K562 (cell line): ENCODE measurements at regions of chr4 and their contacts with region 1.

Region 1: DNA sequence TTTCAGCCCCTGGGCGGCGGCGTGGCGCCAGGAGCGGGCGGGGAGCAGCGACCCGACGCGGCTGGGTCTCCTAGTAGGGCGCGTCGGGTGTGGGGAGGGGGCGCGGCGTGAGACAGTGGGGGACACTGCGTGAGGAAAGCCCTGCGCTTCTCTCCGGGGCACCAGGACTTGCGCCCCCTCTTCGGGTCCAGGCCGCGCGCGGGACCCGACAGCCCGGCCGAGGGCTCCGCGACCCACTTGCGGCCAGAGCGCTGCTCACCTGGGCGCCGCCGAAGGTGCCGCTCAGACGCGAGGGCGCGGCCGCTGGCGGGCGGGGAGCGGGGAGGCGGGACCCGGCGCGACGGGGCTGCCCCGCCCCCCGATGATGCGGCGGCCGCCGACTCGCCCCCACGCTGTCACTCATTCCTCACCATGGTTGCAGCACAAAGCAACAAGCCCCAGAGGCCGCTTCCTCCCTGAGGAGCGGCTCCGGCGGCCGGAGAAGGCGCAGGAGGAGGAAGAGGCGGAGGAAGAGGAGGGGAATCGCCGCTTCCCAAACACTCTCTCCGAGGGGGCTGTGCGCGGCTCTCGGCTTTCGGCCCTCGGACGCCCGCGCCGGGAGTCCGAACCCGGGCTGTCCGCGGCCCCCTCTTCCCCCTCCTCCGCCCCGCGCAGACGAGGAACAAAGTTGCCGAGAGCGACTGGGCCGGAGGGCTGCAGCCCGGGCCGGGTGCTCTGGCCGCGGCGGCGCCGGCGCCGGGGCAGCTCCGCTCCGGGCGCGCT is at the start of gene RAPGEF2:
- DNase-seq: peak; percentile 94 to 96 (median 94)
- ATAC-seq: peak; percentile 79
- H3K4me3 ChIP-seq: peak within 1 kb of the TSS; percentile 93
- H3K27ac ChIP-seq: peak within 1 kb of the TSS; percentile 83
- H3K4me1 ChIP-seq: peaks cover 13 to 31% of the 10 kb centered on the region in 2 experiments
- H3K27me3 ChIP-seq: no peaks in the 10 kb centered on the region
- CTCF ChIP-seq: 0 out of 6 replicates have a peak, but pooled peaks of 1 of the 3 experiments have one; percentile 5
- EP300 ChIP-seq: no peak
- POLR2A ChIP-seq: peak; percentile 76
- RAD21 ChIP-seq: no peak
- polyA plus RNA-seq, gene RAPGEF2: 3.1 to 3.4 TPM

Region 2: GRCh38 chr4:158578476-158578875 is 524.3 kb before region 1 on chr4:
- CTCF ChIA-PET with region 1: no interaction called
- POLR2A ChIA-PET with region 1: no interaction called
- in situ Hi-C with region 1: no loop called
- intact Hi-C with region 1: no loop called
- DNase-seq: peak in 3 of 4 experiments; percentile 12 to 35 (median 27)
- ATAC-seq: peak; percentile 95
- H3K4me3 ChIP-seq: no peak overlapping the region
- H3K27ac ChIP-seq: no peak overlapping the region
- H3K4me1 ChIP-seq: no peaks in the 10 kb centered on the region
- H3K27me3 ChIP-seq: no peaks in the 10 kb centered on the region; a peak in 1 of 5 replicates
- CTCF ChIP-seq: peak; percentile 34 to 63 (median 38); a peak in 3 of 6 replicates
- EP300 ChIP-seq: no peak
- POLR2A ChIP-seq: no peak
- RAD21 ChIP-seq: peak; percentile 54 to 63

Region 3: DNA sequence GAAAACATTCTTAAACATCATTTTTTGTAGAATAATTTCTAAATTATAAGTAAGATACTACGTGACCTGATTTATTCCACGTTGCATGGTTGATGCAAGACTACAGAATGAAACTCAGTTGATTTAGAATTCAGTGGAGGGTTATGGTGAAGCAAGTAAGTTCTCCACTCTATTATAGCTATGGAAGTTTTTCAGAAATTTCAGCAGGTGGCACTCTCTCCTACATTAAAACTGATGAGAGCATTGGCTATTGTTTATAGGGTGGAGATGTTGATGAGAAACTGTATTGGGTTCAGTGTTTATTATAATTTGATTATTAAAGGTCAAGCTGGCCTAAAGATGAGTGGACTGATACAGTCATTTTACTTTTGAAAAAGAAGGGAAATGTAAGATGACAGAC is 246.0 kb before region 1 on chr4:
- CTCF ChIA-PET with region 1: no interaction called
- POLR2A ChIA-PET with region 1: no interaction called
- in situ Hi-C with region 1: no loop called
- intact Hi-C with region 1: loop called (anchors 5 kb)
- DNase-seq: peak in 2 of 4 experiments; percentile 28 to 32
- ATAC-seq: peak; percentile 96
- H3K4me3 ChIP-seq: no peak overlapping the region
- H3K27ac ChIP-seq: no peak overlapping the region
- H3K4me1 ChIP-seq: no peaks in the 10 kb centered on the region
- H3K27me3 ChIP-seq: no peaks in the 10 kb centered on the region
- CTCF ChIP-seq: peak; percentile 55 to 80 (median 61); a peak in 5 of 6 replicates
- EP300 ChIP-seq: no peak
- POLR2A ChIP-seq: no peak
- RAD21 ChIP-seq: peak; percentile 90 to 92

Region 4: DNA sequence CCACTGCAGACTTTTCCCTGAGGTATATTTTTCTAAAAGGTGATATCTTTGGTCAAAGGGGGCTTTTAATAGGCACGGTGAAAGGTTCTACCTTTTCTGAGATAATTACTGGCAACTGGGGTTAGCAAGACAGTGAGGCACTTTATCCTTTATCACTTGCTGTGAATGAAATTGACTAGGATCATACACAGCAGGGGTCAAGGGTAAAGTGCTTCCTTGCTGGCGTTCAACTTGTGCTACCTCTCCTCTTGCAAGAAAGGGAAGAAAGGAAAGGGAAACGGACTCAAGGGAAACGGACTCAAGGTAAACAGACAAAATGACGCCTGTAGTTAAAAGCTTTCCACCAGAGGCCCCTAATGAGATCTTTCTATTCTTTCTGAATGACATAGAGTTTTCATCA is 78.5 kb before region 1 on chr4:
- CTCF ChIA-PET with region 1: no interaction called
- POLR2A ChIA-PET with region 1: no interaction called
- in situ Hi-C with region 1: no loop called
- intact Hi-C with region 1: loop called (anchors 5 kb)
- DNase-seq: no peak
- ATAC-seq: peak; percentile 64
- H3K4me3 ChIP-seq: no peak overlapping the region
- H3K27ac ChIP-seq: no peak overlapping the region
- H3K4me1 ChIP-seq: no peaks in the 10 kb centered on the region; a peak in 1 of 5 replicates
- H3K27me3 ChIP-seq: no peaks in the 10 kb centered on the region
- CTCF ChIP-seq: peak in 2 of 3 experiments; percentile 11 to 38; a peak in 1 of 6 replicates
- EP300 ChIP-seq: no peak
- POLR2A ChIP-seq: no peak
- RAD21 ChIP-seq: peak in 1 of 2 experiments; percentile 21; a peak in 1 of 4 replicates

Region 5: DNA sequence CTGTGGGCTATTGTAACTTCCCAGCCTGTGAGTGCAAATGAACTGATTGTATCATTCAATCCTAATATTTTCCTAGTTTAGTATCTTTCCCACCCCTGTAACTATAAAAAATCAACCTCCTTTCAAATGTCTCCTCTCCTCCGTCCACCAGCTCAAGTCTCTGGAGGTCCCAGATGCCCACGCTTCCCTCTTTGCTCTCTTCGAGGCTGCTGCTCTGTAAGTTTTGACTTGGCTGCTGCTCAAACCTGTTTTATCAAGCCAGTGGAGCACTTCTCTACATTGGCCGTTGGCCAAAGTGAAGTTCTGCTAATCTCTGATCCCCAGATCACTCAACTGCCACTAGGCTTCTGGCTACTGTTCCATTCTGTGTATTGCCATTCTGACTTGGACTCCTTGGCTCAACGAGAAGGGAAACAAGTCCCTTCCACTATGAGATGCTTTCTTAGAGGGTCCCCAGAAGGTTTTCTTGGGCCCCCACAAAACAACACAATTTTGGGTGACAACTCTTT is 60.7 kb before region 1 on chr4:
- CTCF ChIA-PET with region 1: no interaction called
- POLR2A ChIA-PET with region 1: no interaction called
- in situ Hi-C with region 1: no loop called
- intact Hi-C with region 1: loop called (anchors 1 kb)
- DNase-seq: peak; percentile 50 to 98 (median 70)
- ATAC-seq: peak; percentile 88
- H3K4me3 ChIP-seq: peak overlapping the region; percentile 21
- H3K27ac ChIP-seq: peak overlapping the region; percentile 84
- H3K4me1 ChIP-seq: peaks cover 26 to 39% of the 10 kb centered on the region in 2 experiments
- H3K27me3 ChIP-seq: no peaks in the 10 kb centered on the region
- CTCF ChIP-seq: 0 out of 6 replicates have a peak, but pooled peaks of 1 of the 3 experiments have one; percentile 16
- EP300 ChIP-seq: peak; percentile 99
- POLR2A ChIP-seq: peak; percentile 62
- RAD21 ChIP-seq: peak in 1 of 2 experiments; percentile 41; a peak in 3 of 4 replicates

Region 6: DNA sequence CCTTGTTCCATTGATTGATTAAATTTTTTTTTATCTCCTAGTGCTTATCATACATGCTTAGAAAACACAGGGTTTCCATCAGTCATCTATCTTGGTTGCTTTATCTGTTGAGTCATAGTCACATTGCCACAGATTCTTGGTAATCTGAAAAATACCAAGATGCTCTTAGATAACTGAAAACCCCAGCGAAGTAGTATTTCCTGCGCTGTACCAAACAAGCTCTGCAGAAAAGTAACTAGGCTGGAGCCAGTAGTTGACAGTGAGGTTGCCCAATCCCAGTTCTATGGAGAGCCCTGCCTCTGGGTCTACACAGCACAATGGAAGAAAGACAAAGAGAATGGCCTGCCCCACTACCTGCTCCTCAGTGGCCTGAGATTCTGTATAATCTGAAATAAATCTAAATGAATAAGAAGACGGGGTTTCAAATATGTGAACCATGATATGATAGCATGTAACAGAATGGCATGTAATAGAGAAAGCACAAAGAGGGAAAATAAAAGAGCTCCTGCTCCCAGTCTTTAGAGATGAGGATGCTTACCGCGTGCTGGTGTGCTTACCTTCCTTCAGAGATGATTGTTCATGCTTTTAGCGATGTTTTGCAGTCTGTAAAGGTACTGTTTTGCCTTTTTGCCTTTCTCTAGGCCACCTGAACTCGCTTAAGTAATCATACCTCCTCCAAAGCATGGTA is 55.2 kb before region 1 on chr4:
- CTCF ChIA-PET with region 1: no interaction called
- POLR2A ChIA-PET with region 1: no interaction called
- in situ Hi-C with region 1: no loop called
- intact Hi-C with region 1: loop called (anchors 1 kb)
- DNase-seq: peak; percentile 15 to 64 (median 28)
- ATAC-seq: peak; percentile 69
- H3K4me3 ChIP-seq: no peak overlapping the region
- H3K27ac ChIP-seq: peak overlapping the region; percentile 63
- H3K4me1 ChIP-seq: peaks cover 25 to 40% of the 10 kb centered on the region in 2 experiments
- H3K27me3 ChIP-seq: no peaks in the 10 kb centered on the region
- CTCF ChIP-seq: no peak
- EP300 ChIP-seq: peak; percentile 94
- POLR2A ChIP-seq: no peak
- RAD21 ChIP-seq: no peak

Region 7: GRCh38 chr4:159150821-159151390 is 48.1 kb after region 1 on chr4:
- CTCF ChIA-PET with region 1: no interaction called
- POLR2A ChIA-PET with region 1: interaction called, 10 read pairs
- in situ Hi-C with region 1: no loop called
- intact Hi-C with region 1: loop called (anchors 2 kb)
- DNase-seq: peak; percentile 73 to 94 (median 80)
- ATAC-seq: peak; percentile 84
- H3K4me3 ChIP-seq: peak overlapping the region; percentile 1; the same call in 1 of the 2 replicates
- H3K27ac ChIP-seq: peak overlapping the region; percentile 93
- H3K4me1 ChIP-seq: peaks cover 12 to 60% of the 10 kb centered on the region in 2 experiments; a peak in 4 of 5 replicates
- H3K27me3 ChIP-seq: no peaks in the 10 kb centered on the region
- CTCF ChIP-seq: no peak
- EP300 ChIP-seq: peak; percentile 99
- POLR2A ChIP-seq: peak; percentile 49; the same call in 1 of the 2 replicates
- RAD21 ChIP-seq: peak in 1 of 2 experiments; percentile 27; a peak in 1 of 4 replicates